Mucosa of descending colon (tissue), 3 donors: ENCODE measurements at regions of chr12 and their contacts with region 1.

Region 1: GRCh38 chr12:95402096-95402495 is 71.9 kb upstream of the METAP2 start:
- DNase-seq: no peak
- ATAC-seq: no peak
- H3K4me3 ChIP-seq: no peak overlapping the region
- H3K4me1 ChIP-seq: no peaks in the 10 kb centered on the region
- CTCF ChIP-seq: no peak

Region 2: DNA sequence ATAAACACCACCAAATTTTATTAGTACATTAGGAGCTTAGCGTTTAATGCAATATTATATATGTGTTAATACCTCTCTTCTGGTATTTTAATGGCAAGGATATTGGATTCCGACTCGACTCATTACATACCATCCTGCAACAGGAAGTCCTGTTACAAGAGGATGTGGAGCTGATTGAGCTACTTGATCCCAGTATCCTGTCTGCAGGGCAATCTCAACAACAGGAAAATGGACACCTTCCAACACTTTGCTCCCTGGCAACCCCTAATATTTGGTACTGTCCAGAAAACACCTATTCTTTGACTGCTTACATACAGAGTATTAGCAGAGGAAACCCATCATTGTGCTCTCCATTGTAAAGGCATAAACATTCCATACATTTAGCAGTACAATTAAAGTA is 139.3 kb before region 1 on chr12:
- intact Hi-C with region 1: no loop called
- DNase-seq: no peak
- ATAC-seq: no peak
- H3K4me3 ChIP-seq: no peak overlapping the region
- H3K4me1 ChIP-seq: no peaks in the 10 kb centered on the region
- CTCF ChIP-seq: no peak

Region 3: DNA sequence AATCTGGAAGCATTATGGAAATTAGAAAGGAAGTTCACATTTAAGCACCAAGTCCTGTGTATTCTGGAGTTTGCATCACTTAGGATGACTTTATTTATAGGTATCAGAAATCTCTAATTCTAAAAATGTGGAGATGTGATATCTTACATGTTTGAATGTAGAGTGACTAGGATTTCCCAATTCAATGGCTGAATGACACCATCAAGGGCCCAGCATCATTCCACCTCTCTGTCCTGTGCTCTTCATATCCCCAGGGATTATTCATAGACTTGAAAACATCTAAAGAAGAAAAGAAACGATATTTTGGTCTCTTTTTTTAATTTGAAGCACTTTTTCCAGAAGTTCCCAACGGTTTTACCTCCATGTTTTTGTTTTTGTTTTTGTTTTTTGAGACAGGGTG is 56.7 kb after region 1 on chr12:
- intact Hi-C with region 1: loop called in 1 of 2 experiments (anchors 10 kb)
- DNase-seq: no peak
- ATAC-seq: no peak
- H3K4me3 ChIP-seq: no peak overlapping the region
- H3K4me1 ChIP-seq: no peaks in the 10 kb centered on the region
- CTCF ChIP-seq: no peak